ENCODE measurements at regions of chr18 and their contacts with region 1.

Region 1: DNA sequence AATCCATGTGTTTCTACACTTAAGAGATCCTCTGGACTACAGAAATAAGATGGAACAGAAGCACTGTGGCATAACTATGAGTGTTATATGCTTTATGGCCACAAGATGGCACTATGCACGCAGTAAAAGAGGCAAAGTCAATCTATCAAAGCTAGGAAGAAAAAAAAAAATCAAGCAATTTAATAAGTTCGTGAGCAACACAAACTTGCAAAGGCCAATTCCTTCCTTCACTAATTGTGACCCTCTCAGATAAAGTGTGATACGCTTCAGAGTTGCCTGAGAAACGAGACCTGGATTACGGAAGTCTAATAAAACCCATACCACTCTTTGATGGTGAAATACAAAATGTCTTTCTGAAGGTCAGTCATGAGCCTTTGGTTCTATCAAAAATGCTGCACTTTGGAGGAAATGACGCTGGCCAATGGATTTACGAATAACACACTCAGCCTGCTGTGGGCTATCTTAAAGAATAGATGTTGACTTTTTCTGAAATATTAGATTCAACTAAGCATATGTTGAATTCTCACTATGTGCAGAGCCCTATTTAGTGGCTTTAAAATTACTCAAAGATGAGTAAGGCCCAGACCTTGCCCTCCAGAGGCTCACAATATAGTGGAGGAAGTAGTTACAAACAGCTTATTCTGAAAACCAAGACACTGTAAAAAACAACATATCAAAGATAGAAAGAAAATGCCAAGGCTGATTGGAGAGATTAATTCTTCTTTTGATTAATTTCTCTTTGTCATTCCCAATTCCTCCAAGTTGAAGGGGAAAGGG is 35.5 kb upstream of the TTR start:
- DNase-seq: peak; percentile 51
- H3K4me3 ChIP-seq: no peak overlapping the region
- H3K27ac ChIP-seq: no peak overlapping the region
- H3K4me1 ChIP-seq: peaks cover 3% of the 10 kb centered on the region
- H3K27me3 ChIP-seq: no peaks in the 10 kb centered on the region
- CTCF ChIP-seq: peak; percentile 73 to 78

Region 2: DNA sequence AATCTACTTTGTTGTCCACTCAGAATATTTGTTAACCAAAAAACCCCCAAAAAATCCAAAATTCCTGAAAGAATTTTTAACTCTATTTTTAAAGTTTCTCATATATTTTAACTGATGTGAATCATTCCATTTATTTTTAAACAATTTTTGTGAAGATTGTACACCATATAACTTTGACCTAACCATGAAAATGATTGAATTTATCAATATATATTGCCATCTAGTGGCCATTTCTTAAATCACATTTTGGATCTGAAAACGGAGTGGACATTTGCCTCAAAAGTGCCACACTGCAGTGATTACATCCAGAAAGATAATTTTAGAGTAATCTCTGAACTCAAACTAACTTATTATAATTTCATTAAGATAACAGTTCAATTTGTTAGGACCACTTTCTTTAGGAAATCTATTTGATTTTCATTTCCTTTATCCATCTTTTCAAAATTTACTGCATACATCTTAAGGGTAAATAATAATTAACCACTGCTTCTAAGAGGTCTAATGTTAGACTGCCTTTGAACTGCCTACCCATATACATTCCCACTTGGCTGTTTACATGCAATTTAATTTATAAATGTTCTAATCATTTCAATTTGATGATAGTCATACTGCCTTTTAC is 584.7 kb before region 1 on chr18:
- CTCF ChIA-PET with region 1: no interaction called
- dilution Hi-C with region 1: no loop called
- in situ Hi-C with region 1: no loop called
- intact Hi-C with region 1: loop called (anchors 2 kb)
- DNase-seq: no peak
- H3K4me3 ChIP-seq: no peak overlapping the region
- H3K27ac ChIP-seq: no peak overlapping the region
- H3K4me1 ChIP-seq: peaks cover 4% of the 10 kb centered on the region
- H3K27me3 ChIP-seq: no peaks in the 10 kb centered on the region
- CTCF ChIP-seq: peak; percentile 47 to 63

Region 3: GRCh38 chr18:31176531-31176930 is 379.6 kb before region 1 on chr18:
- CTCF ChIA-PET with region 1: no interaction called
- dilution Hi-C with region 1: no loop called
- in situ Hi-C with region 1: no loop called
- intact Hi-C with region 1: no loop called
- DNase-seq: peak; percentile 80
- H3K4me3 ChIP-seq: no peak overlapping the region
- H3K27ac ChIP-seq: peak overlapping the region; percentile 11
- H3K4me1 ChIP-seq: peaks cover 5% of the 10 kb centered on the region
- H3K27me3 ChIP-seq: no peaks in the 10 kb centered on the region
- CTCF ChIP-seq: no peak

Region 4: GRCh38 chr18:31722369-31722957 is 166.3 kb after region 1 on chr18:
- CTCF ChIA-PET with region 1: no interaction called
- dilution Hi-C with region 1: loop called (anchors 25 kb)
- in situ Hi-C with region 1: loop called (anchors 5 to 10 kb)
- intact Hi-C with region 1: loop called (anchors 1 kb)
- DNase-seq: peak; percentile 72
- H3K4me3 ChIP-seq: no peak overlapping the region
- H3K27ac ChIP-seq: no peak overlapping the region
- H3K4me1 ChIP-seq: peaks cover 4% of the 10 kb centered on the region
- H3K27me3 ChIP-seq: no peaks in the 10 kb centered on the region
- CTCF ChIP-seq: peak; percentile 86 to 90

Region 5: DNA sequence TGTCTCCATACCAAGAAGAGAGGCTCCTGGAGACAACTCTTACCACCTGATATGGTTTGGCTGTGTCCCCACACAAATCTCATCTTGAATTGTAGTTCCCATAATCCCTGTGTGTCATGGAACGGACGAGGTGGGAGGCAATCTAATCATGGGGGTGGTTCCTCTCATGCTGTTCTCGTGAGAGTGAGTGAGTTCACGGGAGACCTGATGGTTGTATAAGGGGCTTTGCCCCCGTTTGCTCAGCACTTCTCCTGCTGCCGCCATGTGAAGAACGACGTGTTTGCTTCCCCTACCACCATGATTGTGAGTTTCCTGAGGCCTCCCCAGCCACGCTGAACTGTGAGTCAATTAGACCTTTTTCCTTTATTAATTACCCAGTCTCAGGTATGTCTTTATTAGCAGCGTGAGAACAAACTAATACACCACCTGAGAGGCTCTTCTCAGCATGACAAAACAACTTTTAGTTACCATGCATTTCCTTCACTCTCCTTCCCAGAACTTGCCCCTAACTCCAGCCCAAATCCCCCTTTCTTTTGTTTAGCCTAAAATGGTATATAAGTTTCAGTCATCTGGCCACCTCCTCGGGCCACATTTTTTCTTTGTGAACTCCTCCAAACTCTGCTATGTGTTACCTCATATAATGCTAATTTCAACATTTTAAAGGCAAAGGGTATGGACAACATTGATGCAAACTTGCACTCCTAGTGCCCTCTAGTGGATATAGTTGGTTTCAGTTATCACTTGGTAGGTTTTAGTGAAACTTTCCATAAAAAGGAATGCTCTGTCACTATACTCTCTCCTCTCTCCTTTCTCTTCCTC is 263.2 kb after region 1 on chr18:
- CTCF ChIA-PET with region 1: interaction called, 6 read pairs
- dilution Hi-C with region 1: no loop called
- in situ Hi-C with region 1: loop called (anchors 10 kb)
- intact Hi-C with region 1: loop called (anchors 1 kb)
- DNase-seq: peak; percentile 37
- H3K4me3 ChIP-seq: no peak overlapping the region
- H3K27ac ChIP-seq: no peak overlapping the region
- H3K4me1 ChIP-seq: no peaks in the 10 kb centered on the region
- H3K27me3 ChIP-seq: no peaks in the 10 kb centered on the region
- CTCF ChIP-seq: peak; percentile 72 to 89

Region 6: DNA sequence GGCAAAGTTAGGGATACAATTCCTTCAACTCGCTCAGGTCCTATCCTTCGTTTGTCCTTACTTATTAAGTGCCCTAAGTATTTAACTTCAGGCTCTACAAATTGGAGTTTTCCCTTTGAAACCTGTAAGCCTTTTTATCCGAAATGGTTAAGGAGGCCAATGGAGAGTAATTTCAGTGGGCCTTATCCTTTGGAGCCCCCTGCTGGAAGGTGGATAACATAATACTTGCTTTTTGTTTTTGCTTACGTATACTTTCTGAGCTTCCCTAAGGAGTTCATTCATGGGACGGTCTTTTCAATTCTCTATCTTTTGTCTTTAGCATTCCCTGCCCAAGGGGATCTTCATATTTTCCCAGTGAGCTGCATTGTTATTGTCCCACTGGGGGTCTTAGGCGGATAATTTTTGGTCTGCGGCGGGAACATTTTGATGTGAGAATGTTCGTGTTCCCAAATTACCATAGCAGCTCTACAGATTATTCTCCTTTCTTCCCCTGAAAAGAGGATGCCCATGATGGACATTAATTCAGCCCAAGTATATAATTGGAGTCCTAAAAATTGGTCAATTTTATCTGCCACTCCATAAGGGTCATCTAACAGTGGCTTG is 421.2 kb after region 1 on chr18:
- CTCF ChIA-PET with region 1: no interaction called
- dilution Hi-C with region 1: no loop called
- in situ Hi-C with region 1: loop called in 1 of 2 experiments (anchors 25 kb)
- intact Hi-C with region 1: loop called (anchors 1 kb)
- DNase-seq: peak; percentile 32
- H3K4me3 ChIP-seq: no peak overlapping the region
- H3K27ac ChIP-seq: no peak overlapping the region
- H3K4me1 ChIP-seq: no peaks in the 10 kb centered on the region
- H3K27me3 ChIP-seq: no peaks in the 10 kb centered on the region
- CTCF ChIP-seq: peak; percentile 56 to 66